BJ (cell line): ENCODE measurements at regions of chr5 and their contacts with region 1.

Region 1: GRCh38 chr5:175718401-175719108 is 60.7 kb downstream of the HRH2 start:
- DNase-seq: no peak
- H3K4me3 ChIP-seq: no peak overlapping the region
- H3K27me3 ChIP-seq: no peaks in the 10 kb centered on the region
- CTCF ChIP-seq: peak; percentile 25; the same call in 1 of the 2 replicates

Region 2: DNA sequence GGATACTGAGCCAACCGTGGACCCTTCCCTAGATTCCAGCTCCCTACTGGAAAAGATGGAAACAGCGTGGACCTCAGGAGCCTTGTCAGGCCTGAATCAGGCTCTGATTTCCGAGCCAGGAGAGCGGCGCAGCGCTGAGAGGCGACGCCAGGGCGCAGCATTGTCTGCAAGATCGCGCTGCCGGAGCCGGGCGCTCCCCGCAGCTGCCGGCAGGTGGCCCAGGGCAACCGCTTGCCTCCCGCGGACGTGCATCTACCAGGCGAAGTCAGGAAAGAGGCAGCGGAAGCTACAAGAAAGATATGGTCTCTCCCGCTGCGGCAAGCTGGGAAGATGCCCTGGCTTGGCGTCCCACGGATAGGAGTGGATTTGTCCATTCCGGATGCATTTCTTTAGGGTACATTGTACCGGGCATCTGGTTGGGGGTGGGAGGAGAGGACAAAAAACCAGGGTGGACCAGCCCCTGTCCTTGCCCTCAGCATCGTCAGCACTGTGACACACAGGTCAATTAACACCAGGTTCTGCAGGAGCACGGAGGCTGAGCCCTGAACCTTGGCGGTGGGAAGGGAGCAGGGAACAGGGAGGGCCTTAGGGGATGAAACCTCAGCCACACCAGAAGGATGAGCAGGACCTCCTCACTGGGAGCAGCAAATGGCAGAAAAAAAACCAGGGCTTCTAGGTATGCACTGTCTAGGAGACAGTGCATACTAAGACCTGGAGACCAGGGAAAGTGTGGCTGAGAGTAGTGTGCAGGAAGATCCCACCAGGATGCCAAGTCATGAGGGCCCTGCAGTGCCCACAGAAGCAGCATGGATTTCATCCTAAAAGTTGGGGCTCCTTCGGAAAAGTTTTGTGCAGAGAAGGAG is 184.3 kb before region 1 on chr5:
- CTCF ChIA-PET with region 1: interaction called, 11 read pairs
- POLR2A ChIA-PET with region 1: no interaction called
- DNase-seq: peak; percentile 7
- H3K4me3 ChIP-seq: no peak overlapping the region
- H3K27me3 ChIP-seq: no peaks in the 10 kb centered on the region
- CTCF ChIP-seq: peak; percentile 98

Region 3: GRCh38 chr5:175556777-175557176 is 161.8 kb before region 1 on chr5:
- CTCF ChIA-PET with region 1: no interaction called
- POLR2A ChIA-PET with region 1: no interaction called
- DNase-seq: no peak
- H3K4me3 ChIP-seq: no peak overlapping the region
- H3K27me3 ChIP-seq: no peaks in the 10 kb centered on the region
- CTCF ChIP-seq: no peak

Region 4: GRCh38 chr5:175729829-175730277 is 11.3 kb after region 1 on chr5:
- CTCF ChIA-PET with region 1: interaction called, 10 read pairs
- POLR2A ChIA-PET with region 1: no interaction called
- DNase-seq: peak; percentile 19
- H3K4me3 ChIP-seq: no peak overlapping the region
- H3K27me3 ChIP-seq: no peaks in the 10 kb centered on the region
- CTCF ChIP-seq: peak; percentile 95

Region 5: GRCh38 chr5:175743676-175744210 is 25.2 kb after region 1 on chr5:
- CTCF ChIA-PET with region 1: no interaction called
- POLR2A ChIA-PET with region 1: no interaction called
- DNase-seq: no peak
- H3K4me3 ChIP-seq: no peak overlapping the region
- H3K27me3 ChIP-seq: no peaks in the 10 kb centered on the region
- CTCF ChIP-seq: no peak

Region 6: DNA sequence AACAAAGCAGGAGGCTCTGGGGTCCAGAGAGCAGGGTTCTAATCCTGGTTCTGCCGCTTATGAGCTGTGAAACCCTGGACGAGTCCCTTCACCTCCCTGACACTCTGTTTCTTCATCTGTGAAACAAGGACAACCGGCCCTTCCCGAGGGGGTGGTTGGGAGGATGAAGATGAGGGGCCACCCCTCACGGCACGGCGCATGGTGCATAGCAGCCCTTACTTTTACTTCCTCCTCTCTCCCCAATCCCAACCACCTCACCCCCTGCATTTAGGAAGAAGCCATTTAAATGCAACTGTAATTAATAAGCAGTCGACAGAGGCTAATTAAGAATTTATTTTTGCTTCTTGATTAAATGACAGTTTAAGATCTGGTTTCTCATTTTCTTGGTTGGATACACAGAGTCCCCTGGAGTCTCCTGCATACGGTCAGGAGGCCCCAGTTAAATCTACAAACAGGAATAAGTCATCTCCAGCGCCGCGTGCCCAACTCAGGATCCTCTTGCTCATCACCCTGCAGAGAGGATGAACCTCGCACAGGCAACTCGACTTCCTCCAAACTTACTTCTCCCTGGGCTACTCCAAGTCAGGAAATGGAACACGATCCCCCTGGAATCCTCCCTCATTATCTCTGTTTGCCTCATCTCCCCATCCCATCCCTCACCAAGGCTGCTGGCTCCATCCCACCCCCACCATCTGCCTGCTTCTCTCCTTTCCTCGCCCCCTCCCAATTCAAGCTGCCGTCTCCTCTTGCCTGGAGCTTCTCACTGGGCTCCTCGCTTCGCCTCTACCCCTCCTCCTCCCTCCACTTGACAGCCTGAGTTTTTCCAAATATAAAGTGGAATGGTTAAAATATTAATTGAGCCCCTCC is 35.2 kb after region 1 on chr5:
- CTCF ChIA-PET with region 1: no interaction called
- POLR2A ChIA-PET with region 1: no interaction called
- DNase-seq: no peak
- H3K4me3 ChIP-seq: no peak overlapping the region
- H3K27me3 ChIP-seq: no peaks in the 10 kb centered on the region
- CTCF ChIP-seq: no peak